Heart right ventricle (tissue), 16 donors: ENCODE measurements at regions of chr15 and their contacts with region 1.

Region 1: DNA sequence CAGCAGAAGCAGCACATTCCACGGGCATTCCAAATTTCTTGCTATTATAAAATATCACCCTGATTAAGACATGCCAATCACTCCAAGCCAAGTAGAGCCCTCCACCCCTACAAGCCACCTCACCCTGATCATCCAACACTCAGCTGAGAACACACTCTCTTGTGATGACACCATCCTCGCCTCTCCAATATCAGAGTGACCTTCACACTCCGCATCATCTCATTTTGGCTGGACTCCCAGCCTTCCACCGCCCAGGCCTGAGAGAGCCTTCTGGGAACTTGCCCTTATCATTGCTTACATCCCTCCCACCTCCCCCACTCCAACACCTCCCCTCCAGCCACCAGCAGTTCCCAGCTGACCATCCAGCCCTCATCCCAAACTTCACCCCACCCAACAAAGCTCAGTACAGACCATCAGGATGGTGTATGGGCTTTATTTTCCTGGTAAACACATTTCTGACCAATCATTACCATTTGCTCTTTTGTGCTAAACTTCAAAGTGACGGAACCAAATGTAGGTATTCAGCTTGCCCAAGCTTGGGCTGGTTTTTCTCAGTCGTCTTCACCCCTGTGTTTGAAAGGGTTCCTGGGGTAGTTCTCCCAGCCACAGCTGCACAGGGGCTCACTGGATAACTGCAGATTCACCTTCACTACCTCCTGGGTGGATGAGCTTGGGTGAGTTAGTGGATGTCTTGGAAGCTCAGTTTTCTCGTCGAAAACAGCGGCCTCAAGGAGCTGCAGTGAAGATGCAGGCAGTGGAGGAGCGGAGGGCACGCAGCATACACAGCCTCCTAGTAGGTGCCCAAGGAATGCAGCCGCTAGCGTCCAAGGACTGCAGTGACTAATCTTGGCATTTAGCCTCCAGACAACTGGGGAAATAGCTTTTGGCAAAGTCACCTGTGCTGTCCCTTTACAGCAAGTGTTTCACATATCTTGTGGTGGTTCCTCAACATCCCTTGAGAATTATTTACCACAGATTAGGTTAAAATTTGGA is 115.1 kb downstream of the LIPC start:
- DNase-seq: peak; percentile 56 to 76
- ATAC-seq: peak; percentile 74 to 94 (median 90)
- H3K4me3 ChIP-seq: no peak overlapping the region
- H3K27ac ChIP-seq: peak overlapping the region in 9 of 10 donors; percentile 54 to 82 (median 72)
- H3K4me1 ChIP-seq: peaks cover 0 to 42% (median 18%) of the 10 kb centered on the region in 9 donors
- H3K27me3 ChIP-seq: no peaks in the 10 kb centered on the region
- CTCF ChIP-seq: no peak

Region 2: GRCh38 chr15:58453931-58454793 is 92.8 kb before region 1 on chr15:
- intact Hi-C with region 1: no loop called
- DNase-seq: no peak
- ATAC-seq: no peak
- H3K4me3 ChIP-seq: no peak overlapping the region
- H3K27ac ChIP-seq: peak overlapping the region in 2 of 10 donors; percentile 2 to 35
- H3K4me1 ChIP-seq: peaks cover 14 to 48% (median 31%) of the 10 kb centered on the region in 9 donors
- H3K27me3 ChIP-seq: no peaks in the 10 kb centered on the region
- CTCF ChIP-seq: no peak

Region 3: DNA sequence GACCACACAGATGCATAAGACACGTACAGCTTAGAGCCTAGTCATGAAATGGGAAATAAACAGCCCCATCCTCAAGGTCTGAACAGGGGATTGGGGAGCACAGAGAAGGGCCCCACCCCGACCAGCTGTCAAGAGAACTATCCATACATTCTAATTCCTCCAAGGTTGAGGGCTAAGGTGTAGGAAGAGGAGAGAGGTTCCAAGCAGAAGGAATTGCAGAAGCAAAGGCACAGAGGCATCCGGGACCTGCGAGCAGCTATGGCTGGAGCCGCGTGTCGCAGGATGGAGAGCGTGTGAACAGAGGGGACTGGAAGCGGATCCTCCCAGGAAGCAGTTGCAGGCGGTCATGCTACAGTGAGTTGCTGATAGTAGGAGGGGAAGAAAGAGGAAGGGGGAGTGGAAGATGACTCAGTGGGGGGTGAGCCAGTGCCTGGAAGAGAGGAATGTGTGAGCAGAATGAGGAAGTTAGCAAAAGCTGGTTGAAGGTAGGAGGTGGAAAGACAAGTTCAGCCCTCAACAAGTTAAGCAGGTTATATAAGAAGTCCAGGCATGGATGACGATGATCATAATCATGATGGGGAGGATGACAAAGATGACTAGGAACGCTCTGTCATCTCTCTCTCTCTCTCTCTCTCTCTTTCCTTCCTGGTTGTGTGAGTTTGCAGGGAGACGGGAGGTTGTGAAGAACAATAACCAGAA is 25.5 kb before region 1 on chr15:
- intact Hi-C with region 1: loop called in 1 of 10 experiments (anchors 2 kb)
- DNase-seq: peak; percentile 33 to 38
- ATAC-seq: peak in 5 of 8 donors; percentile 5 to 66 (median 52)
- H3K4me3 ChIP-seq: no peak overlapping the region
- H3K27ac ChIP-seq: peak overlapping the region in 7 of 10 donors; percentile 5 to 72 (median 45)
- H3K4me1 ChIP-seq: peaks cover 0 to 96% (median 44%) of the 10 kb centered on the region in 9 donors
- H3K27me3 ChIP-seq: no peaks in the 10 kb centered on the region
- CTCF ChIP-seq: no peak

Region 4: DNA sequence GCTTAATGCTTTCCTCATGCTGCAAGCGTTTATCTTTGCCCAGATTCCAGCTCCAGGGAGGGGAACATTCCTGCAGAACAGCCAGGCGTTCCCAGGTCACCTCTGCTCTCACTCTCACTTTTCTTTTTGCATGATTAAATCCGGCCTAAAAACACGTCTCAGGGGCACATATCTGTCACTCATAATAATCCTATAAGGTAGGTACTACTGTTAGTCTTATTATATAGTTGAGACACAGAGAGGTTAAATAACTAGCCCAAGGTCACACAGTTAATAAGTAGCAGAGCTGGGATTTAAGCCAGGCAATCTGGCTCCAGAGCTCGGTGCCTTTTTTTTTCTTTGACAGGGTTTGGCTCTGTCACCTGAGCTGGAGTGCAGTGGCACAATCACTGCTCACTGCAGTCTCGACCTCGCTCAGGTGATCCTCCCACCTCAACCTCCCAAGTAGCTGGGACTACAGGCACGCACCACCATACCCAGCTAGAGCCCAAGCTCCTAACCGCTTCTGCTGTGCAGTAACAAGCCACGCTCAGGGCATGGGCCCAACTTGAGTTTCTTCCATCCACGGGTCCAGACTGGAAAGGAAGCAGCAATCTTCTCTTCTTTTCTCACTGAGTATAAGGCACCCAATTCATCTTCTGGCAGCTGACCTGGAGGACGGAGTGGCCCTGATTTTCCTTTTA is 18.6 kb before region 1 on chr15:
- intact Hi-C with region 1: loop called in 2 of 10 experiments (anchors 2 kb)
- DNase-seq: no peak
- ATAC-seq: peak; percentile 44 to 82 (median 69)
- H3K4me3 ChIP-seq: no peak overlapping the region
- H3K27ac ChIP-seq: peak overlapping the region in 8 of 10 donors; percentile 14 to 74 (median 56)
- H3K4me1 ChIP-seq: peaks cover 0 to 53% (median 25%) of the 10 kb centered on the region in 9 donors
- H3K27me3 ChIP-seq: no peaks in the 10 kb centered on the region
- CTCF ChIP-seq: no peak

Region 5: GRCh38 chr15:58889363-58889762 is 342.4 kb after region 1 on chr15:
- intact Hi-C with region 1: no loop called
- DNase-seq: no peak
- ATAC-seq: no peak
- H3K4me3 ChIP-seq: no peak overlapping the region
- H3K27ac ChIP-seq: no peak overlapping the region
- H3K4me1 ChIP-seq: no peaks in the 10 kb centered on the region
- H3K27me3 ChIP-seq: no peaks in the 10 kb centered on the region
- CTCF ChIP-seq: no peak